Pancreas (tissue), 10 donors: ENCODE measurements at regions of chr9 and their contacts with region 1.

Region 1: GRCh38 chr9:114082017-114082762 is 4.1 kb upstream of the AMBP start:
- DNase-seq: peak; percentile 87 to 95 (median 90)
- ATAC-seq: peak; percentile 72 to 87 (median 76)
- H3K4me3 ChIP-seq: no peak overlapping the region
- H3K27ac ChIP-seq: peak overlapping the region; percentile 37 to 82 (median 68)
- H3K4me1 ChIP-seq: peaks cover 40 to 51% (median 46%) of the 10 kb centered on the region in 3 donors
- H3K27me3 ChIP-seq: no peaks in the 10 kb centered on the region
- CTCF ChIP-seq: peak; percentile 92 to 95 (median 93)

Region 2: GRCh38 chr9:114016629-114017420 is 65.4 kb before region 1 on chr9:
- intact Hi-C with region 1: no loop called
- DNase-seq: peak in 2 of 6 donors; percentile 11 to 32
- ATAC-seq: no peak
- H3K4me3 ChIP-seq: no peak overlapping the region
- H3K27ac ChIP-seq: no peak overlapping the region
- H3K4me1 ChIP-seq: no peaks in the 10 kb centered on the region
- H3K27me3 ChIP-seq: no peaks in the 10 kb centered on the region
- CTCF ChIP-seq: no peak

Region 3: GRCh38 chr9:114291064-114291474 is 208.9 kb after region 1 on chr9:
- intact Hi-C with region 1: loop called in 1 of 3 experiments (anchors 5 kb)
- DNase-seq: peak; percentile 45 to 93 (median 78)
- ATAC-seq: peak; percentile 60 to 84 (median 78)
- H3K4me3 ChIP-seq: no peak overlapping the region
- H3K27ac ChIP-seq: no peak overlapping the region
- H3K4me1 ChIP-seq: no peaks in the 10 kb centered on the region
- H3K27me3 ChIP-seq: no peaks in the 10 kb centered on the region
- CTCF ChIP-seq: peak; percentile 91 to 97 (median 95)

Region 4: DNA sequence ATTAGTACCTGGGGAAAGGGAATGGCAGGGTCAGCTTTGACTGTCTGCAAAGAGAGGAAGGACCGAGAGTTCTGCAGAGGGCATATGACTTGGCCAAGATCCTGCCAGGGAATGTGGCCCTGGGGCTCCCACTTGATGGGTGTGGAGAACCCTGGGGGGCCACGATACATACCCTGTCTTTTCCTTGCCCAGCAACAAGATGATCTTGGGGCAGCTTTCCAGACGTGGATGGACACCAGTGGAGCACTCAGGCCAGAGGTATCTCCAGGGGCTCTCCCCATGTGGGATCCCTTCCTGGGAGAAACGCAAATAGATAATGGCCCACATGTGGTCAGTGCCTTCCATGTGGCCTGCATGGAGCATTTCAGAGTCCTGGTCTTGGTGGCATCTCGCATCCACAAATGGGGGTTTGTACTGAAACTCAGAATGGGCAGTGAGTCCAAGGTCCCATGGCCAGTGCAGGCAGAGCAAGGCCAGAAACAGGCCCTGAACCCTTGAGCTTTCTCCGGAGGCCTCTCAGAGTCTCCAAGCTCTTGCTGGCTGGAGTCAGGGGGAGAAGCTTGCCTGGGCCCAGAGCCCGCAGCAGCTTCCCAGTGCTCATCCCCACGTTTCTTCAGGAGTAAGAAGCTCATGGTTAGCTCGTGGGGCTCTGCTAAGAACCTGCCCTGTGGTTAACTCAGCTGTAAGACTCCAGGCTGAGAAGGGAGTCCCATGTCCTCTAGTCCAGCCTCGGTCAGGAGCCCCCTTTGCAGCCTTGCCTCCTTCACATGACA is 222.4 kb after region 1 on chr9:
- intact Hi-C with region 1: no loop called
- DNase-seq: peak in 4 of 6 donors; percentile 6 to 36 (median 16)
- ATAC-seq: no peak
- H3K4me3 ChIP-seq: no peak overlapping the region
- H3K27ac ChIP-seq: no peak overlapping the region
- H3K4me1 ChIP-seq: no peaks in the 10 kb centered on the region
- H3K27me3 ChIP-seq: no peaks in the 10 kb centered on the region
- CTCF ChIP-seq: no peak